Mammary epithelial cell (primary cell): ENCODE measurements at regions of chr7 and their contacts with region 1.

Region 1: DNA sequence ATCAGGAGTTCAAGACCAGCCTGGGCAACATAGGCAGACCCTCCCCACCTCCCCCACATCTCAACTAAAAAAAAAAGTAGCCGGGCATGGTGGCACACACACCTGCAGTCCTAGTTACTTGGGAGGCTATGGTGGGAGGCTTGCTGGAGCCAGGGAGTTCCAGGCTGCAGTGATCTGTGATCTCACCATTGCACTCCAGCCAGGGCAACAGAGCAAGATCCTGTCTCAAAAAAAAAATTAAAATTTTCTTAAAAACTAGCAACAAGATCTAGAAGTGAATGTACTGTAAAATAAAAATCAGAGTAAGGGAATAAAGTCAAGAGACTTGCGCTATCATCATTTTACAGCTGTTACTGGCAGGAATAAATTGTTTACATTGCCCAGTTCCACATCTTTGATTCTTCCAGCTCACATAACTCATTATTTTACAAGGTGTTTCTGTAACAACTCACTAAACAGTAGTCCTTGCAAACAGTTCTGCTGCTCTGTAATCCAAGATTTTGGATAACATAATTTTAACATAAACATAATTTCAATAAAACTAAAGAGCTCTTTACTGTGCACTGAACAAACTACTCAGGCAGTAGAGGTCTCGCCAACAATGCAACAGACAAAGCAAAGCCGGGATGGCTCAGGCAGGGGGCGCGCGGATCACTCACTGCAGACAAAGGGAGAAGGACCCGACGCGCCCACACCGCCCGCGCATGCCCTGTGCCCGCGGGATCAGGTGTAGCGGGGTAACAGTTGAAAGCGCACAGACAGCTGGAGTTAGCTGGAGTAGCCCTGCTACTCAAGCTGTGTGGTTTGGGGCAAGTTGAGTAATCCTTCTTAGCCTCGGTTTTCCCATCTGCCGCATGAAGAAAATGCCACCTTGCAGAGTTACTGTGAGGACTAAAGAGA is 73.3 kb upstream of the NFE2L3 start:
- DNase-seq: peak; percentile 60
- H3K4me3 ChIP-seq: no peak overlapping the region
- H3K27ac ChIP-seq: no peak overlapping the region
- H3K4me1 ChIP-seq: peaks cover 13% of the 10 kb centered on the region
- H3K27me3 ChIP-seq: no peaks in the 10 kb centered on the region
- CTCF ChIP-seq: peak; percentile 10 to 64

Region 2: DNA sequence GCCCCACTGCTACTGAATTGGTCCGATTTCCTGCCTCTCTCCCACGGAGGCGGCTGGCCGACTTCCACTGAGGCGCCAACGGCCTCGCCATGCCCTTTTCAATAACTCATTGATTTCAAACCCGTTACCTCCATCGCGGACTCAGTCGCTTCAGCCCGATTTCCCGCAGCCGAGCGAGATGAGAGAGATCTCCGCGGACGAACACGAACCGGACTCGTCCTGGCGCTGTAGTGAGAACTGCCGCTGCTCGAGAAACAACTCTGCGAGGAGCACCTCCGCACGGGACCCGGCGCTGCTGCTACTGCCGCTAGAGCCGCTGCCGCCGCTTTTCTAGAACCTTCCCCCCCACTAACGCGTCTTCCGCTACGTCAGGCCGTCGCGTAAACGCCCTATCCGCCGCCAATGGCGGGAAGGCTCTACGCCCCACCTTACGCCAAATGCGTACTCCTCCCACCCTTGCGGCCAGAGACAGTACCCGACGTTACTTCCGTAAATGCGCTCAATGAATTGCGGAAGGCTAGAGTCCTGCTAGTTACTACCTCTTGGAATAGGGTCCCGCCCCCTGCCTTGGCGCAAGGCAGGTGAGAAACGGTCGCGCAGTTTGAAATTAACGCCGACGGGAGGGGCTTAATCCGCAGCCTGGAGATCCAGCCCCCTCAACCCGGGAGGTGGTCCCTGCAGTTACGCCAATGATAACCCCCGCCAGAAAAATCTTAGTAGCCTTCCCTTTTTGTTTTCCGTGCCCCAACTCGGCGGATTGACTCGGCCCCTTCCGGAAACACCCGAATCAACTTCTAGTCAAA is 122.0 kb after region 1 on chr7 and contains the start of gene HNRNPA2B1:
- CTCF ChIA-PET with region 1: interaction called, 6 read pairs
- dilution Hi-C with region 1: no loop called
- in situ Hi-C with region 1: loop called in 1 of 2 experiments (anchors 10 kb)
- intact Hi-C with region 1: no loop called
- DNase-seq: peak; percentile 97
- H3K4me3 ChIP-seq: peak within 1 kb of the TSS; percentile 99 to 100 (median 100)
- H3K27ac ChIP-seq: peak within 1 kb of the TSS; percentile 93
- H3K4me1 ChIP-seq: peaks cover 28% of the 10 kb centered on the region
- H3K27me3 ChIP-seq: no peaks in the 10 kb centered on the region
- CTCF ChIP-seq: no peak
- total RNA-seq, gene HNRNPA2B1: 62.0 to 506 TPM

Region 3: GRCh38 chr7:26356929-26357798 is 278.5 kb after region 1 on chr7:
- CTCF ChIA-PET with region 1: no interaction called
- dilution Hi-C with region 1: no loop called
- in situ Hi-C with region 1: loop called (anchors 10 to 25 kb)
- intact Hi-C with region 1: no loop called
- DNase-seq: no peak
- H3K4me3 ChIP-seq: no peak overlapping the region
- H3K27ac ChIP-seq: no peak overlapping the region
- H3K4me1 ChIP-seq: no peaks in the 10 kb centered on the region
- H3K27me3 ChIP-seq: no peaks in the 10 kb centered on the region
- CTCF ChIP-seq: no peak